ENCODE measurements at regions of chr2 and their contacts with region 1.

Region 1: DNA sequence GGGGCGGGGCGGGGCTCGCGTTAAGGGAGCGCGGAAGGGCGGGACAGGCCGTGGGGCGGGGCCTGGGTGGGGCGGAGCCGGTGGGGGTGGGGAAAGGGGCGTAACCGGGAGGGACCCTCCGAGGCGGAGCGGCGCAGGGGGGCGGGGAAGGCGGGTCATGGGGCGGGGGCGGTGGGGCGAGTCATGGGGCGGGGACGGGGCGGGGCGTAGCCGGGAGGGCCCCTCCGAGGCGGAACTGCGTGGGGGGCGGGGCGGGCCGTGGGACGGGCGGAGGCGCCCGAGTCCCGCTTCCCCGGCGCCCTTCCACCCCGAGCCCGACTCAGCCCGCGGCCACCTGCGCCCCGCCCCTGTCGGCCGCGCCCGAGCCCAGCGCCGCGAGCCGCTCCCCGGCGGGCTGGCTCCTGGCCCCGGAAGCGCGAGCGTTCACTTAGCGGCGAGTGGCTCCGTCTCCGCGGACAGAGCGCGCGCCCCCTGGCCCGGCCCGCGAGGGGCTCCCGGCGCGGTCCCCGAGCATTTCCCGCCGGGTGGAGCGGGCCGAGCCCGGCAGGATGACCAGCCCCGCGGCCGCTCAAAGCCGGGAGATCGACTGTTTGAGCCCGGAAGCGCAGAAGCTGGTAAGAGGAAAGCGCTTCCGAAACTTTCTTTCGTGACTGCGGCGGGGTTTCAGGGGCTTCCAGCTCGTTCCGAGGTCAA is 64.7 kb downstream of the LRRFIP1 start:
- DNase-seq: peak; percentile 90
- H3K4me3 ChIP-seq: peak overlapping the region; percentile 76
- H3K27ac ChIP-seq: peak overlapping the region; percentile 92
- H3K4me1 ChIP-seq: peaks cover 58% of the 10 kb centered on the region
- H3K27me3 ChIP-seq: no peaks in the 10 kb centered on the region
- CTCF ChIP-seq: no peak

Region 2: DNA sequence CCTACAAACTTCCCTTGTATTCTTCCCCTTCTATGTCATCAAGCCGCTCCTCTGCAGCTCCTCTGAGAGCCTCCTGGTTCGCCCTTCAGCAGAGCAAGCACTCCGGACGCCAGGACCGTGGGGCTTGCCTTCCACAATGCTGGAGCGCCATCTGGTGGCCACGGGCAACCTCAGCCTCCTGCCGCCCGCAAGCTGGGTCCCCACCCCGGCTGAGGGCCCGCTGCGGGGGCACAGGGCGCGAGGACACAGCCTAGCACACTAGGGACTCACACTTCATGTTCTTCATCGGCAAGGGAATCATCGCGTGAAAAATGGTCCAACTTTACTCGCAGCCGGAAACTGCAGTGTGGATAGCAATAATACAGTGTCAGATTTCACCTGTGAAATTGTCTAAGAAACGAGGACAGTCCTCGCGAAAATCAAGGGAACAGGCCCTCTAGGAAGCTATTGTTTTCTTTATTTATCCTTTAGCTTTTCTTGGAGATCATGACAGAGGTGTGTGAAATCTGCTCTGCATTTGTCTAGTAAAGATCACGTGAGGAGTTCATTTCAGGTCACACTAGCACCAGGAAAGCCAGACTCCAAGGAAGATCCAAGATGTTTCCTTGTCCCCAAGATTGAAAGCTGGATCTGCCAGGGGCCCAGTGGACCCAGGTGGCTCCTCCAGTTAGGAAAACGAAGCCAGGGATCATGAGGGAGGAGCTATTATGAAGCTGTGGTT is 119.9 kb before region 1 on chr2:
- CTCF ChIA-PET with region 1: no interaction called
- POLR2A ChIA-PET with region 1: no interaction called
- intact Hi-C with region 1: no loop called
- DNase-seq: peak; percentile 92
- H3K4me3 ChIP-seq: no peak overlapping the region
- H3K27ac ChIP-seq: no peak overlapping the region
- H3K4me1 ChIP-seq: no peaks in the 10 kb centered on the region
- H3K27me3 ChIP-seq: no peaks in the 10 kb centered on the region
- CTCF ChIP-seq: peak; percentile 99

Region 3: DNA sequence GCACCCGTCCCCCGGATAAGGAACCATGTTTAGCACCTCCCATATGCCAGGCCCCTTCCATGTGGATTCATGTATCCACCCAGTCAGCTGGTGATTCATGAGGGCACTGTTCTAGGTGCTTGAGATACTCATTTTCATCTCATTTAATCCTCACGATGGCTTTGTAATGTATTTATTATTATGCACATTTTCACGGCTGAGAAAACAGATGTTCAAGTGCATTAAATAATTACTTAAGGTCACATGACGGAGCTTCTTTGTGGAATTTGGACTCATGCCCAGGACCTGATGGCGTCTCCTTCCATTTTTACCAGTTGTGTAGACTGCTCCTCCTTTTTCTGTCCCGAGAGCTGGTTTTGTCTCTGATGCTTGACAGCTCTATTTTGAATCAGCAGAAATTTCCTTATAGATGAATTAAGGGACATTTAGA is 34.4 kb after region 1 on chr2:
- CTCF ChIA-PET with region 1: no interaction called
- POLR2A ChIA-PET with region 1: no interaction called
- intact Hi-C with region 1: loop called (anchors 5 kb)
- DNase-seq: peak; percentile 92
- H3K4me3 ChIP-seq: no peak overlapping the region
- H3K27ac ChIP-seq: no peak overlapping the region
- H3K4me1 ChIP-seq: peaks cover 57% of the 10 kb centered on the region
- H3K27me3 ChIP-seq: no peaks in the 10 kb centered on the region
- CTCF ChIP-seq: no peak

Measured in A673 (cell line).